Pancreas (tissue), 10 donors: ENCODE measurements at regions of chr2 and their contacts with region 1.

Region 1: GRCh38 chr2:62920070-62920469 is 130.6 kb upstream of the OTX1 start:
- DNase-seq: no peak
- ATAC-seq: no peak
- H3K4me3 ChIP-seq: no peak overlapping the region
- H3K27ac ChIP-seq: no peak overlapping the region
- H3K4me1 ChIP-seq: no peaks in the 10 kb centered on the region
- H3K27me3 ChIP-seq: no peaks in the 10 kb centered on the region
- CTCF ChIP-seq: no peak

Region 2: GRCh38 chr2:62447411-62447810 is 472.7 kb before region 1 on chr2:
- intact Hi-C with region 1: loop called in 1 of 3 experiments (anchors 5 kb)
- DNase-seq: no peak
- ATAC-seq: no peak
- H3K4me3 ChIP-seq: no peak overlapping the region
- H3K27ac ChIP-seq: no peak overlapping the region
- H3K4me1 ChIP-seq: no peaks in the 10 kb centered on the region
- H3K27me3 ChIP-seq: no peaks in the 10 kb centered on the region
- CTCF ChIP-seq: no peak

Region 3: GRCh38 chr2:62794791-62795190 is 125.3 kb before region 1 on chr2:
- intact Hi-C with region 1: no loop called
- DNase-seq: no peak
- ATAC-seq: peak; percentile 84 to 91 (median 88)
- H3K4me3 ChIP-seq: no peak overlapping the region
- H3K27ac ChIP-seq: peak overlapping the region in 1 of 4 donors; percentile 2
- H3K4me1 ChIP-seq: peaks cover 34 to 54% (median 49%) of the 10 kb centered on the region in 3 donors
- H3K27me3 ChIP-seq: no peaks in the 10 kb centered on the region
- CTCF ChIP-seq: no peak